ENCODE measurements at regions of chr4 and their contacts with region 1.

Region 1: DNA sequence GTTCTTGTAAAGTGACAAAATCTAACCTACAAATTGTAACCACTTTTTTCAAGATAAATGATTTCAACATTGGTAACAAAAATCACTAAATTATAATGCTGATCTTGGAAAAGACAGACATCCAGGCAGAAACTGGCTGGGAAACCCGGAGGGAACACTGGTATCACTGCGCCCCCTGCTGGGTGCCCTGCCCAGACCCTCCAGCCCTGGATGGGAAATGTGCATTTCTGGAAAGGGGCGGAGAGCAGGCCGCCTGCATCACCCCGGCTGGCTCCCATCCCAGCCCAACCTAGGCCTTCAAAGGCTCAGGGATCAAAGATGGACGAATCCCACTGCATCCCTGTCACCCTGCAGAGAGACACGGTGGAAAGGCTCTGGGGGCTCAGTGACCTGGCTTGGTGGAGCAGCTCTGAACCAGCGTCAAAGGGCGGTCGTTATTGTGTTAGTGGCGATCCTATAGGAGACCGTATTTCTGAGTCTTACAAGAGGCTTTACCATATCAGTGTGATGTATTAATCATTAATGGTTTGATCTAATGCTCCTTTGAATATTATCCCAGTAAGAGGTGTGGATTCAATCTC is 37.3 kb downstream of the ACOX3 start:
- DNase-seq: peak; percentile 96
- H3K4me3 ChIP-seq: no peak overlapping the region
- H3K27ac ChIP-seq: peak overlapping the region; percentile 84 to 88 (median 88)
- H3K4me1 ChIP-seq: peaks cover 34 to 45% (median 42%) of the 10 kb centered on the region in 4 donors
- H3K27me3 ChIP-seq: no peaks in the 10 kb centered on the region
- CTCF ChIP-seq: peak; percentile 89 to 95 (median 90)
- EP300 ChIP-seq: no peak
- POLR2A ChIP-seq: no peak

Region 2: DNA sequence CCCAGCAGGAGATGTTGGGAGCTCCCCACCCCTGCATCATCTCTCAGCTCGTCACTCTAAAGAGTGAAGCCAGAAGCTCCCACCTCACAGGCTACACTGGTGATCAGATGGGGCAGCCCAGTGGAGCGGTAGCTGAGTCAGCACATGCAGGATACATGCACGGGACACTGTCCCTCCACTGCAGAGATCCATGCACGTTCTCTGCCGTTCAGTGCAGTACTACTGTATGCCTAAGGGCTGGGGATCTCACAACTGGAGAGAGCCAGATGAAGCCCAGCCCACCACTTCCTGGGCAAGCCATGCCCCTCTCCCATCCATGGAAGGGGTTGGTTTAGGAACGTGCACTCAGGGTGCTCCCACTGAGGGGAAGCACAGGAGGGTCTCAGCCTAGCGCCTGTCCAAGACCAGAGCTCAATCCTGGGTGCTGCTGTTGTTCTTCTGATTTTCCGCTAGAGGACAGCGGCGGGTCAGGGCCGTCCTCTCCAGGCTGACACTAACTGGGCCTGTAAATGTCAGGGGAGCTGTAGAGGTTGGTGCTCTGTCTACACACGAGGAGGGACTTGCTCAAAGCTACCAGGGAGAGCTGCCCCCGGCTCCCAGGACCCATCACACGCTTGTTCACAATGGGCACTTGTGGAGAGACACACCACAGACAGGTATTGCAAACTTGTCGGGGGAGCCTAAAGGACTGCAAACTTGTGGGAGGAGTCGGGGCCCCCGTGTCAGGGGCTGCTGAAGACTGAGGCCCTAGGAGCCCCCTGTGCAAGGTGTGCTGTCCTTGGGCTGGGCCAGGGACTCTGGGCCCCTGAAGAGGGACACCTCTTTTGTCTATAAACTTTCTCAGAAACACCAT is 226.5 kb before region 1 on chr4:
- intact Hi-C with region 1: loop called (anchors 10 kb)
- DNase-seq: no peak
- H3K4me3 ChIP-seq: no peak overlapping the region
- H3K27ac ChIP-seq: no peak overlapping the region
- H3K4me1 ChIP-seq: peaks cover 2 to 9% (median 6%) of the 10 kb centered on the region in 4 donors
- H3K27me3 ChIP-seq: no peaks in the 10 kb centered on the region
- CTCF ChIP-seq: peak; percentile 53 to 77 (median 61)
- EP300 ChIP-seq: no peak
- POLR2A ChIP-seq: no peak

Region 3: GRCh38 chr4:8192748-8193738 is 210.2 kb before region 1 on chr4:
- intact Hi-C with region 1: no loop called
- DNase-seq: no peak
- H3K4me3 ChIP-seq: no peak overlapping the region
- H3K27ac ChIP-seq: peak overlapping the region in 1 of 4 donors; percentile 36
- H3K4me1 ChIP-seq: peaks cover 42 to 56% (median 52%) of the 10 kb centered on the region in 4 donors
- H3K27me3 ChIP-seq: no peaks in the 10 kb centered on the region
- CTCF ChIP-seq: peak in 1 of 3 experiments; percentile 23
- EP300 ChIP-seq: no peak
- POLR2A ChIP-seq: no peak

Region 4: GRCh38 chr4:8241895-8242696 is 161.2 kb before region 1 on chr4:
- intact Hi-C with region 1: loop called (anchors 1 kb)
- DNase-seq: peak; percentile 96
- H3K4me3 ChIP-seq: no peak overlapping the region
- H3K27ac ChIP-seq: peak overlapping the region; percentile 5 to 67 (median 46)
- H3K4me1 ChIP-seq: peaks cover 12 to 19% (median 13%) of the 10 kb centered on the region in 4 donors
- H3K27me3 ChIP-seq: no peaks in the 10 kb centered on the region
- CTCF ChIP-seq: peak; percentile 92 to 98 (median 98)
- EP300 ChIP-seq: peak; percentile 28
- POLR2A ChIP-seq: no peak

Region 5: DNA sequence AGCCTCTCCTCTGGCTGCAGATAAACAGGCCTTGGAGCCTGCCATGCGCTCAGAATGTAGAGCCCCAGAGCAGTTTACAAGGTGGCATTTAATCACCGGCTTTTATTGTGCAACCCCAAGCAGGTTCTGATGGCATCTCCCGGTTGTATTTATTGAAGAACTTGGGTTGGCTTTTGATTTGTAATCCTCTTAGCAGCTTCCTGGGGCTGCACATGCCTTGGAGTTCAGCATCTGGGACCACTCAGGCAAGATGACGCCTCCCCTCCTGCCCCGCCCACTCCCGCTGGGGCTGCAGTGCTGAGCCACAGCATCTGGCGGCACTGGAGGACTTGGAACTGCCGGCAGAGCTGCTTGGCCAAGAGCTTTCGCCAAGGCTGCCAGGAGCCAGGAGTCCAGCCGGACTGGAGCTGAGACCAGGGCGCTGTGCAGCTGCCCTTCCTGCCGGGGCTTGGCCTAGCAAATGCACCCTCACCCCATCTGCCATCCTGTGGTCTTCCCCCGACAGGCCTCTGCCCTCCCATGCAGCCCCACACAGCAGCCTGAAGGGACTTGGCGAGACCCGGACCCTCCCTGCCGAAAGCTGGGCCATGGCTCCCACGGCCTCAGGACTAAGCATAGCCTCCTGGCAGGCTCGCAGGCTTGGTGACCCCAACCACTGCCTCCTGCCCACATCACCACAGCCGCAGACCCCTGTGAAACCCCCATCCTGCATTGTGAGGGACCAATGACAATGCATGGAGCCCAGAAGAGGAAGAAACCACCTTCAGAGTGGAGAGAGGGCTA is 128.3 kb before region 1 on chr4:
- intact Hi-C with region 1: loop called (anchors 2 kb)
- DNase-seq: peak; percentile 97
- H3K4me3 ChIP-seq: peak overlapping the region in 1 of 4 donors; percentile 27
- H3K27ac ChIP-seq: peak overlapping the region; percentile 72 to 81 (median 78)
- H3K4me1 ChIP-seq: peaks cover 65 to 100% (median 100%) of the 10 kb centered on the region in 4 donors
- H3K27me3 ChIP-seq: peaks cover 0 to 7% (median 0%) of the 10 kb centered on the region in 4 donors
- CTCF ChIP-seq: peak; percentile 45 to 72 (median 61)
- EP300 ChIP-seq: no peak
- POLR2A ChIP-seq: no peak

Region 6: DNA sequence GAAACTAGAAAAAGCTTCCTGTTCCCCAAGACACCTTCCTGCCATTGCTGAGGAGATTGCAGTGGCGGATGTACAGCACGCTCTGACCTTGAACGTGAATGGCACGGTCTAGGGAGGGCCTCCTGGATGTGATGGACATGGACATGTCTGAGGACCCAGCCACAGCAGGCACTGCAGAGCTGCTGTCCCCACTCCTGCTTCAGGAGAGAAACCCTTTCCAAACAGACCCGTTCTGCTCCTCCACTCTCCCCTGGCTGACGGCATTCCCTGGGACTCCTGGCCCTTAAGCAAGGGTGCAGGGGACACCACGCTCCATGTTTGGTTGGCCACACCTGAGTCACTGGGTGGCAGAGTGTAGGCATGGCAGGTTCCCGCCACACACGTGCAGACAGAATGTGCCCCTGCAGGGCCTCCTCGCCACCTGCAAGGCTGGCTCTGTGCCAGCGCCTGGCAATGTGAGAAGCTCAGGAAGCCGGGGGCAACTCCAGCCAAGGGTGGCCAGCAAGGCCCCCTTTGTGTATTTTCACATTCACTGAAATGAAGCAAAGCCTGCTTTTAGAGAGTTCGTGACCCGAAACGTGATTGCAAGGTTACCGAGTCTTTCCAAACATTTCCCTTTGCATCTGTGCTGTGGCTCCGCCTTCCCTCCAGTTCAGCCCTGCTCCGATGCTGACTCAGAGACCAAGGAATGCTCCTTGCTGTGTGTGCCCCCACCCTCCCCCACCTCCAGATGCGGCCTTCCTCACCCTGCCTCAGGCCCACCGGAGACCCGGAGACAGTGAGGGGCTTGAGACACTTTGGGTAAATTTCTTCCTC is 87.6 kb before region 1 on chr4:
- intact Hi-C with region 1: loop called (anchors 5 kb)
- DNase-seq: no peak
- H3K4me3 ChIP-seq: peak overlapping the region in 1 of 4 donors; percentile 30
- H3K27ac ChIP-seq: peak overlapping the region; percentile 56 to 69 (median 64)
- H3K4me1 ChIP-seq: peaks cover 31 to 48% (median 42%) of the 10 kb centered on the region in 4 donors
- H3K27me3 ChIP-seq: no peaks in the 10 kb centered on the region
- CTCF ChIP-seq: peak in 1 of 3 experiments; percentile 20
- EP300 ChIP-seq: no peak
- POLR2A ChIP-seq: no peak

Measured in esophagus muscularis mucosa (tissue), 4 donors.